CD4-positive, alpha-beta memory T cell (primary cell): ENCODE measurements at regions of chr4 and their contacts with region 1.

Region 1: DNA sequence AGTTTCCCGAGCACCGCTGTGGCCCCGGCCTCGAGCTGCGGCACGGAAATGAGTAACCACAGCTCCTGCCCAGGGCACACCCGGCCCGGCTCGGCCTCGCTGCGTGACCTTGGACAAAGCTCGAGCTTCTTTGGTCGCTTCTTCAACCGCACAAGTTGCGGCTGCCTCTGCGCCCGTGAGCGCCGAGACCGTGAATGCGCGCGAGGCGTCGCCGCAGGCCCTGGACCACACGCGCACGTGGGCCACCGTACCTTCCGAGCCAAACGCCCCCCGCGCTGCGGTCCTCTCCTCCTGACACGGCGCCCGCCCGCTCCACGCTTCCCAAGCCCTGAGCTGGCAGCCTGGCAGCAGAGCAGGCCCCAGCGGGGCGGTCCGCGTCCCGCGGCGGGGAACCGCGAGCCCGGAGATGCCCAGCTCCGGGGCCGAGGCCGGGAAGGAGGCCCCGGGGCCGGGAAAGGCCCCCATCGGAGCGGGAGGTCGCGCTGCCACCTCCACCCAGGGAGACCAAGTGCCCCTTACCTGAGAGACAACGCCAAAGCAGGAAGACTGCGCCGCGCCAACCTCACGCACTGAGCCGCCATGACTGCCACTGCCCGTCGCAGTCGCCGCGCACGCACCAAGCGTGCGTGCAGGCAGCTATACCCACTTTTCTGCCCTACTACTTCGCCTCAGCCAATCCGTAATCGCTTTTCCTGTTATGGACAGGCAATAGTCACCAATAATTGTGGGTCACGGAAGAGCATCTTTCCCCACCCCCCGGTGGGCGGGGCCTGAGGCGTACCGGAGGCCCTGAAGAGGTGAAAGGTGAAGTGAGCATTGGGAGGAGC is at the start of gene GRPEL1:
- DNase-seq: peak; percentile 100
- H3K4me3 ChIP-seq: peak within 1 kb of the TSS; percentile 65 to 84
- H3K4me3 Mint-ChIP-seq: peak within 1 kb of the TSS; percentile 93 to 98 (median 96)
- H3K27ac ChIP-seq: peak within 1 kb of the TSS; percentile 69
- H3K27ac Mint-ChIP-seq: peak within 1 kb of the TSS; percentile 82 to 98 (median 96)
- H3K4me1 ChIP-seq: peaks cover 46% of the 10 kb centered on the region
- H3K4me1 Mint-ChIP-seq: peaks cover 20 to 65% (median 45%) of the 10 kb centered on the region in 4 donors
- H3K27me3 ChIP-seq: no peaks in the 10 kb centered on the region
- H3K27me3 Mint-ChIP-seq: peaks cover 0 to 2% of the 10 kb centered on the region in 2 donors
- total RNA-seq, gene GRPEL1: 35.3 to 36.0 TPM

Region 2: DNA sequence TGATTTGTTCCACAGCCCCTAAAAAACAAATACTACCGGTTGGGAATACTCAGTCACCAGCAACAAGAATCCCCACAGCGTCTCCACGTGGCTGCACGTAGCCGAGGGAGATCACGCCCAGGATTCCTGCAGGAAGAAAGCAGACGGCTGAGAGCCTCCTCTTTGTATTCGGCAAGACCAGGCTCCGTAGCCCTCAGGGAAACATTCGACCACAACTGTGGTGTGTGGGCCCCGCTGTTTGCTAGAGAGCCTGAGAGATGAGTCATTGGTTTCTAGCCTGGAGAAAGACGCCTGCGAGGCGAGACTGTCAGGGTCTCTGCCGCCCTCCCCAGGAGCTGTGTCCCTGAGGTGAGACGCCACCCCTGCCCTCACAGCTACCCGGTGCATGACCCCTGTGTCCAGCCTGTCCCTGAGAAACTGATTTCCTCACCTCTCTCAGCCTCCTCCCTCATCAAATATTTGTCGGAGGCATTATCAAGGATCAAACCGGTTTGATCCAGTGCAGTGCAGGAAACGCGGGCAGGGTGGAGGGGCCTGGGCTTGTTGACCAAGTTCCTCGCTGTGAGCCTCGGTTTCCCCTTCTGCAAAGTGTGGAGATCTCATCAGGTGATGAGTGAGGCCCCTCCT is 378.7 kb before region 1 on chr4:
- CTCF ChIA-PET with region 1: no interaction called
- POLR2A ChIA-PET with region 1: interaction called, 18 read pairs
- intact Hi-C with region 1: no loop called
- DNase-seq: peak; percentile 60 to 92 (median 64)
- H3K4me3 ChIP-seq: peak overlapping the region; percentile 18 to 55
- H3K4me3 Mint-ChIP-seq: peak overlapping the region; percentile 87 to 97 (median 93)
- H3K27ac ChIP-seq: peak overlapping the region; percentile 62
- H3K27ac Mint-ChIP-seq: peak overlapping the region; percentile 89 to 99 (median 97)
- H3K4me1 ChIP-seq: peaks cover 73% of the 10 kb centered on the region
- H3K4me1 Mint-ChIP-seq: peaks cover 55 to 88% (median 72%) of the 10 kb centered on the region in 4 donors
- H3K27me3 ChIP-seq: no peaks in the 10 kb centered on the region
- H3K27me3 Mint-ChIP-seq: no peaks in the 10 kb centered on the region

Region 3: GRCh38 chr4:6783053-6783981 is 284.3 kb before region 1 on chr4:
- CTCF ChIA-PET with region 1: interaction called, 9 read pairs
- POLR2A ChIA-PET with region 1: interaction called, 17 read pairs
- intact Hi-C with region 1: loop called (anchors 1 kb)
- DNase-seq: peak; percentile 87 to 89 (median 88)
- H3K4me3 ChIP-seq: peak overlapping the region; percentile 38 to 71
- H3K4me3 Mint-ChIP-seq: peak overlapping the region; percentile 84 to 92 (median 88)
- H3K27ac ChIP-seq: peak overlapping the region; percentile 96
- H3K27ac Mint-ChIP-seq: peak overlapping the region; percentile 88 to 93 (median 91)
- H3K4me1 ChIP-seq: peaks cover 44% of the 10 kb centered on the region
- H3K4me1 Mint-ChIP-seq: peaks cover 32 to 61% (median 47%) of the 10 kb centered on the region in 4 donors
- H3K27me3 ChIP-seq: no peaks in the 10 kb centered on the region
- H3K27me3 Mint-ChIP-seq: no peaks in the 10 kb centered on the region

Region 4: GRCh38 chr4:6898763-6899162 is 168.9 kb before region 1 on chr4:
- CTCF ChIA-PET with region 1: interaction called, 22 read pairs
- POLR2A ChIA-PET with region 1: no interaction called
- intact Hi-C with region 1: no loop called
- DNase-seq: no peak
- H3K4me3 ChIP-seq: no peak overlapping the region
- H3K4me3 Mint-ChIP-seq: peak overlapping the region in 7 of 8 donors; percentile 18 to 78 (median 67)
- H3K27ac ChIP-seq: no peak overlapping the region
- H3K27ac Mint-ChIP-seq: peak overlapping the region; percentile 82 to 93 (median 88)
- H3K4me1 ChIP-seq: peaks cover 30% of the 10 kb centered on the region
- H3K4me1 Mint-ChIP-seq: peaks cover 13 to 37% (median 24%) of the 10 kb centered on the region in 4 donors
- H3K27me3 ChIP-seq: no peaks in the 10 kb centered on the region
- H3K27me3 Mint-ChIP-seq: no peaks in the 10 kb centered on the region

Region 5: GRCh38 chr4:6974138-6974848 is 93.4 kb before region 1 on chr4:
- CTCF ChIA-PET with region 1: interaction called, 26 read pairs
- POLR2A ChIA-PET with region 1: interaction called, 6 read pairs
- intact Hi-C with region 1: loop called (anchors 1 kb)
- DNase-seq: peak; percentile 73 to 83 (median 76)
- H3K4me3 ChIP-seq: no peak overlapping the region
- H3K4me3 Mint-ChIP-seq: no peak overlapping the region
- H3K27ac ChIP-seq: no peak overlapping the region
- H3K27ac Mint-ChIP-seq: peak overlapping the region; percentile 48 to 86 (median 72)
- H3K4me1 ChIP-seq: peaks cover 9% of the 10 kb centered on the region
- H3K4me1 Mint-ChIP-seq: peaks cover 18 to 35% (median 19%) of the 10 kb centered on the region in 4 donors
- H3K27me3 ChIP-seq: no peaks in the 10 kb centered on the region
- H3K27me3 Mint-ChIP-seq: no peaks in the 10 kb centered on the region

Region 6: DNA sequence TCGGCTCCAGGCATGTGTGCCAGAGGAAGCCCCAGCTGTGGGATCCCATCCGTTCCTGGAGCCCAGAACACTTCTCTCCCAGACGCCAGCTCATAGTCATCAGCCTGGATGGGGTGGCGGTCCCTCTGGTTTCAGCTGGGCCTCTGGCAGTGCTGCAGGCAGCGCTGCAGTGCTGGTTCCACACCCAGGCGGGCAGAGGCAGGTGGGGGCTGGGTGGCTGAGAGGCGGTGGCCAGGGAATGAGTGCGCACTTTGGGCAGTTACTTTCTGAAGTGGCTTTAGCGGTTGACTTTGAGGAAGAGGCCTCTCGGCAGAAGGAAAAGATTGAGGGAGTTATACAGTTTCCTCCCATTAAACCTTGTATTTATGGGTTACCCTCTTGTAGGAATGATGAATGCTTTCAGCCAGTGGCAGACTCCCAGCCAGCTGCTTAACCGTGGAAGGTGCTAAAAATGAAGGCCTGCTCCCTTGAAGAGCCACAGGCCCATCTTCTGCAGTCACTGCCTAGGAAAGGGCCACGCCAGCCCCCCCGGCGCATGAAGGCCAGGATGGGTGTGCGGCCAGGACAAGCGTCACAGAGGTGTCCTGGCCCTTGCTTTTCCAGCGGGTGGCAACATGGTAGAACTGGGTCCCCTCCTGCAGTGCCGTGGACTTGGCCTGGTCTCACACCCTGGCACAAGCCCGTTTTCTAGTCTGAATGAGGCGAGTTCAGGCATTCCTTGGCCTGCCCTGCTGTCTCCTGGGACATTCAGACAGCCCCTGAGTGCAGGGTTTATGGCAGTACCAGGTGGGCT is 14.5 kb before region 1 on chr4:
- CTCF ChIA-PET with region 1: interaction called, 76 read pairs
- POLR2A ChIA-PET with region 1: interaction called, 231 read pairs
- intact Hi-C with region 1: no loop called
- DNase-seq: peak in 2 of 5 donors; percentile 18 to 35
- H3K4me3 ChIP-seq: no peak overlapping the region
- H3K4me3 Mint-ChIP-seq: peak overlapping the region in 2 of 8 donors; percentile 33 to 45
- H3K27ac ChIP-seq: no peak overlapping the region
- H3K27ac Mint-ChIP-seq: peak overlapping the region in 4 of 7 donors; percentile 30 to 62 (median 52)
- H3K4me1 ChIP-seq: peaks cover 20% of the 10 kb centered on the region
- H3K4me1 Mint-ChIP-seq: peaks cover 18 to 56% (median 29%) of the 10 kb centered on the region in 4 donors
- H3K27me3 ChIP-seq: no peaks in the 10 kb centered on the region
- H3K27me3 Mint-ChIP-seq: no peaks in the 10 kb centered on the region